Breast epithelium (tissue), 4 donors: ENCODE measurements at regions of chrX and their contacts with region 1.

Region 1: GRCh38 chrX:100076031-100076430 is 334.0 kb downstream of the PCDH19 start:
- DNase-seq: no peak
- H3K4me3 ChIP-seq: no peak overlapping the region
- H3K27ac ChIP-seq: no peak overlapping the region
- H3K4me1 ChIP-seq: no peaks in the 10 kb centered on the region
- H3K27me3 ChIP-seq: peaks cover 0 to 5% of the 10 kb centered on the region in 2 donors
- CTCF ChIP-seq: no peak
- POLR2A ChIP-seq: no peak

Region 2: DNA sequence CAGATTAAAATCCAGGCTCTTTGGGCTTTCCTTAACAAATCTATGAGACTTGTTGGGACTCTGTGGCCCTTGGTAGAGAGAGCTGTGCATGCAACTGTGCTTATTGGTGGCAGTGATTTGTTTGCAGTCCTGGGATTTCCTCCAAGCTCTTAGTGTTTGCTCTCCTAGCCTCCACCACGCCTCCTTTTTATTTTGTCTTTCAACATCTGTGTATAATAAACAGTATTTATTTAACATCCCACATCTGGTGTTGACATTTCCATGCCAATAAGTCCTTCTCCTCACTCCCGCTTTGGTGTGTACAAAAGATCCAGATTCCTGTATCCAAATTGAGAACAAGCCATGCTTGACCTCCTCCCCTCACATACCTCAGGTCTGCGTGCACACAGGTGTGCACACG is 511.9 kb after region 1 on chrX:
- intact Hi-C with region 1: loop called (anchors 5 kb)
- DNase-seq: no peak
- H3K4me3 ChIP-seq: no peak overlapping the region
- H3K27ac ChIP-seq: no peak overlapping the region
- H3K4me1 ChIP-seq: no peaks in the 10 kb centered on the region
- H3K27me3 ChIP-seq: peaks cover 0 to 73% of the 10 kb centered on the region in 2 donors
- CTCF ChIP-seq: no peak
- POLR2A ChIP-seq: no peak

Region 3: DNA sequence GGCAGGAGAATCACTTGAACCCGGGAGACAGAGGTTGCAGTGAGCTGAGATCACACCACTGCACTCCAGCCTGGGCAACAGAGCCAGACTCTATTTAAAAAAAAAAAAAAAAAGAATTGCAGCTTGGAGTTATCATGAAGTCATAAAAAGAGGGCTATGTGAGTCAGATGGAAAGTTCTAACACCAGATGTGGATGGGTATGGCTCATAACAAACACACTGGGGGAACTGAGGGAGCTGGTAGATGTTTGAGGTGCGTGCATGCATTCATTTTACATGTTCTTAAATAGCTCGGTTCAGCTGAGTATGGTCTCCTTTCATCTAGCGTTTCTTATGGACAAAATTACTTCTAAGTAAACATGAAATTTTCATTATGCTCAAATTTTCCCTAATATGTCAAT is 964.2 kb after region 1 on chrX:
- intact Hi-C with region 1: no loop called
- DNase-seq: no peak
- H3K4me3 ChIP-seq: no peak overlapping the region
- H3K27ac ChIP-seq: no peak overlapping the region
- H3K4me1 ChIP-seq: no peaks in the 10 kb centered on the region
- H3K27me3 ChIP-seq: peaks cover 0 to 4% of the 10 kb centered on the region in 2 donors
- CTCF ChIP-seq: no peak
- POLR2A ChIP-seq: no peak